B cell (primary cell): ENCODE measurements at regions of chr2 and their contacts with region 1.

Region 1: DNA sequence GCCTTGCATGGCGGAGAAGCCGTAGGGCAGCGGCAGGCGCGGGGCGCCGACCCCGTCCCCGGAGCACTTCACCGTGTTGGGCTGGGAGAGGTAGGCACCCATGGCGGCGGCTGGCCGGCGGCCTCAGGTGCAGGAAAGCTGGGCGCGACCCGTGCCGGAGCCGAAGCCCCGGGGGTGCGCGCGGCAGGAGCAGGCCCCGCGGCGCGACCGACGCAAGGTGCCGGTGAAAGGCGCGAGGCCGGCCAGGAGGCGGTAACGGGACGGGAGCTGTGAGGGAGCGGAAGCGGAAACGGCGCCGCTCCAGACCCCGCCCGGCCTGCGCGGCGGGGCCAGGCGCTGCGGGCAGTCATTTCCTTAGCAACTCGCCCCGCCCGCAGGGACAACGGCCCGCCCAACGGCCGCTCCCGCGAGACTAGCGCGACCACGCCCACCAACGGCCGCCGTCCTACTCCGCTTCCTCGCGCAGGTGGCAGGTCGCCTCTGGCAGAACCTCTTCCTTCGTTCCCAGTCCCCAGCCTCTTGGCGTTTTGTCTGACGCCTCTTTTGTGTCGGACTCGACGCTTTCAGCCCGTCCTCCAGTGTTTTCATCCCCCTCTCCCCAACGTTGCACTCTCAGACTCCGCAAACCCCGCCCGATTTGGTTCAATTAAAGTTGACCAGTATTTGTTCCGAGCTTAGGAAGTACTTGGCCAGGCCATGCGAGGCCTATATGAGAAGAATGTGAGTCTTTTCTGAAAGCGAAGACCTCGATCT is at the start of gene PPM1G:
- DNase-seq: peak; percentile 96
- ATAC-seq: peak; percentile 97
- H3K4me3 ChIP-seq: peak within 1 kb of the TSS; percentile 28 to 96 (median 95)
- H3K4me3 Mint-ChIP-seq: peak within 1 kb of the TSS; percentile 87
- H3K27ac ChIP-seq: peak within 1 kb of the TSS; percentile 76 to 77
- H3K27ac Mint-ChIP-seq: peak within 1 kb of the TSS; percentile 90
- H3K4me1 ChIP-seq: peaks cover 15 to 20% of the 10 kb centered on the region in 2 donors
- H3K4me1 Mint-ChIP-seq: peaks cover 26% of the 10 kb centered on the region
- H3K27me3 ChIP-seq: no peaks in the 10 kb centered on the region
- H3K27me3 Mint-ChIP-seq: peaks cover 13% of the 10 kb centered on the region
- CTCF ChIP-seq: no peak
- total RNA-seq, gene PPM1G: 45.5 and 48.9 TPM in 2 replicates

Region 2: DNA sequence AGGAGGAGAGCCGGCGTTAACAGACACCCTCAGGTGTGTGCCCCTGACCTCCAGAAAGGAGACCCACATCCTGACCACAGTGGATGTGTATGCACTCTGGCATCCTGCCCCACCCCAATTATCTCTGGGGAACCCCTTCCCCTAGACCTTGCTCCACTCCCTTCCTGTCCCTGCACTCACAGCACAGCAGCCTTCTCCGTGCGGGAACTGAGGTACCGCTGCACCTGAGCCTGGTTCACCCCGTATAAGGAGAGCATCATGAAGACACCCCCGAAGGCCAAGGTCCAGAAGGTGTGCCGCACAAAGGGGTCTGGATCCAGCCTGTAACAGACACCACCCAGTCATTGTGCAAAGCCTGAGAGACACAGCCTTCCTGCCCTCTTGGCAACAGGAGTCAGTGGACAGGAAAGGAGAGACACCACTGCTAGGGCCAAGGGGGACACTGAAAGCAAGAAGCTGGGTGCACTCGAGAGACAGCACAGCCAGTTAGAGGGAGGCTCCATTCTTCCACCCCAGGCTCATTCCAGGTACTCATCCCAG is 204.8 kb before region 1 on chr2:
- CTCF ChIA-PET with region 1: no interaction called
- POLR2A ChIA-PET with region 1: no interaction called
- intact Hi-C with region 1: no loop called
- DNase-seq: peak; percentile 11
- ATAC-seq: no peak
- H3K4me3 ChIP-seq: no peak overlapping the region
- H3K4me3 Mint-ChIP-seq: no peak overlapping the region
- H3K27ac ChIP-seq: no peak overlapping the region
- H3K27ac Mint-ChIP-seq: no peak overlapping the region
- H3K4me1 ChIP-seq: no peaks in the 10 kb centered on the region
- H3K4me1 Mint-ChIP-seq: no peaks in the 10 kb centered on the region
- H3K27me3 ChIP-seq: no peaks in the 10 kb centered on the region
- H3K27me3 Mint-ChIP-seq: no peaks in the 10 kb centered on the region
- CTCF ChIP-seq: no peak

Region 3: DNA sequence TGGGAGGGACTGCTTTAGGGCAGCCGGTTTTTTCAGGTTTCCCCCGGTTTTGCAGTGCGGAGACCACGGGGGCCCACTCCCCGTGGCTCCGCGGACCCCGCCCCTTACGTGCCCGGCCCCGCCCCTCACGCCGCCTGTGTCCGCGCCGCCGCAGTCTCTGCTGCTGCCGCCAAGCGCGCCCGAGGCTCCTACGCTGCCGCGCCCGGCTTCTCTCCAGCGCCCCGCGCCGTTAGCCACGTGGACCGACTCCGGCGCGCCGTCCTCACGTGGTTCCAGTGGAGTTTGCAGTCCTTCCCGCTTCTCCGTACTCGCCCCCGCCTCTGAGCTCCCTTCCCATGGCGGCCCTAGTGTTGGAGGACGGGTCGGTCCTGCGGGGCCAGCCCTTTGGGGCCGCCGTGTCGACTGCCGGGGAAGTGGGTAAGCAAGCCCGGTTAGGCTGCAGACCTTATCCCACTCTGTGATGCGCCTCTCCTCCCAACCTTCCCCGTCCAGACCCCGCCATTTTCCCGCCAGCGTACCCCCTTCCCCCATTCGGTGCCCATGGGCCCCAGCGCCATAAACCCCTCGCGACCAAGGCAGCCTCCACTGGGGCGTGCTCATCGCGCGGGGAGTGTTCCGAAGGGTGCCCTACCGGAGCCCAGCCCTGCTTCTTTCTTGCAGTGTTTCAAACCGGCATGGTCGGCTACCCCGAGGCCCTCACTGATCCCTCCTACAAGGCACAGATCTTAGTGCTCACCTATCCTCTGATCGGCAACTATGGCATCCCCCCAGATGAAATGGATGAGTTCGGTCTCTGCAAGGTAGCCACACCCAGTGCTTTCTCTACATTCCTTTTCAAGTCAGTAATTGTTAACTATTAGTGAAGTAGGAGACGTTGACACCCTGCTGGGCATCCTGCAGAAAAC is 192.0 kb before region 1 on chr2 and contains the start of gene CAD:
- CTCF ChIA-PET with region 1: no interaction called
- POLR2A ChIA-PET with region 1: no interaction called
- intact Hi-C with region 1: loop called (anchors 10 kb)
- DNase-seq: peak; percentile 89
- ATAC-seq: peak; percentile 86
- H3K4me3 ChIP-seq: peak within 1 kb of the TSS; percentile 11 to 85 (median 79)
- H3K4me3 Mint-ChIP-seq: peak within 1 kb of the TSS; percentile 98
- H3K27ac ChIP-seq: peak within 1 kb of the TSS; percentile 70 to 74
- H3K27ac Mint-ChIP-seq: peak within 1 kb of the TSS; percentile 87
- H3K4me1 ChIP-seq: peaks cover 28 to 33% of the 10 kb centered on the region in 2 donors
- H3K4me1 Mint-ChIP-seq: peaks cover 44% of the 10 kb centered on the region
- H3K27me3 ChIP-seq: no peaks in the 10 kb centered on the region
- H3K27me3 Mint-ChIP-seq: no peaks in the 10 kb centered on the region
- CTCF ChIP-seq: no peak
- total RNA-seq, gene CAD: 35.6 and 36.0 TPM in 2 replicates

Region 4: GRCh38 chr2:27380626-27381545 is 28.6 kb before region 1 on chr2 and contains the start of gene ZNF513:
- CTCF ChIA-PET with region 1: interaction called, 9 read pairs
- POLR2A ChIA-PET with region 1: interaction called, 5 read pairs
- intact Hi-C with region 1: loop called (anchors 1 kb)
- DNase-seq: peak; percentile 92
- ATAC-seq: peak; percentile 94
- H3K4me3 ChIP-seq: peak within 1 kb of the TSS; percentile 40 to 66 (median 63)
- H3K4me3 Mint-ChIP-seq: peak within 1 kb of the TSS; percentile 94
- H3K27ac ChIP-seq: peak within 1 kb of the TSS; percentile 56 to 94
- H3K27ac Mint-ChIP-seq: peak within 1 kb of the TSS; percentile 96
- H3K4me1 ChIP-seq: peaks cover 16 to 20% of the 10 kb centered on the region in 2 donors
- H3K4me1 Mint-ChIP-seq: peaks cover 30% of the 10 kb centered on the region
- H3K27me3 ChIP-seq: no peaks in the 10 kb centered on the region
- H3K27me3 Mint-ChIP-seq: no peaks in the 10 kb centered on the region
- CTCF ChIP-seq: no peak
- total RNA-seq, gene ZNF513: 29.0 and 31.7 TPM in 2 replicates

Region 5: GRCh38 chr2:27441958-27442919 is 32.7 kb after region 1 on chr2 and contains the start of gene KRTCAP3:
- CTCF ChIA-PET with region 1: no interaction called
- POLR2A ChIA-PET with region 1: no interaction called
- intact Hi-C with region 1: loop called (anchors 1 kb)
- DNase-seq: peak; percentile 70
- ATAC-seq: peak; percentile 98
- H3K4me3 ChIP-seq: peak within 1 kb of the TSS in 3 of 5 experiments; percentile 19 to 37 (median 27)
- H3K4me3 Mint-ChIP-seq: peak within 1 kb of the TSS; percentile 72
- H3K27ac ChIP-seq: no peak within 1 kb of the TSS
- H3K27ac Mint-ChIP-seq: peak within 1 kb of the TSS; percentile 72
- H3K4me1 ChIP-seq: peaks cover 3 to 6% of the 10 kb centered on the region in 2 donors
- H3K4me1 Mint-ChIP-seq: peaks cover 12% of the 10 kb centered on the region
- H3K27me3 ChIP-seq: no peaks in the 10 kb centered on the region
- H3K27me3 Mint-ChIP-seq: no peaks in the 10 kb centered on the region
- CTCF ChIP-seq: peak; percentile 58
- total RNA-seq, gene KRTCAP3: 15.0 and 16.5 TPM in 2 replicates

Region 6: GRCh38 chr2:27663463-27664249 is 254.2 kb after region 1 on chr2 and contains the starts of genes SLC4A1AP and SUPT7L:
- CTCF ChIA-PET with region 1: no interaction called
- POLR2A ChIA-PET with region 1: no interaction called
- intact Hi-C with region 1: loop called (anchors 1 kb)
- DNase-seq: peak; percentile 94
- ATAC-seq: peak; percentile 80
- H3K4me3 ChIP-seq: peak within 1 kb of the TSS; percentile 75 to 100 (median 97)
- H3K4me3 Mint-ChIP-seq: peak within 1 kb of the TSS; percentile 99
- H3K27ac ChIP-seq: peak within 1 kb of the TSS; percentile 75 to 99
- H3K27ac Mint-ChIP-seq: peak within 1 kb of the TSS; percentile 99
- H3K4me1 ChIP-seq: peaks cover 19 to 23% of the 10 kb centered on the region in 2 donors
- H3K4me1 Mint-ChIP-seq: peaks cover 42% of the 10 kb centered on the region
- H3K27me3 ChIP-seq: no peaks in the 10 kb centered on the region
- H3K27me3 Mint-ChIP-seq: no peaks in the 10 kb centered on the region
- CTCF ChIP-seq: no peak
- total RNA-seq, gene SLC4A1AP: 23.1 and 25.6 TPM in 2 replicates
- total RNA-seq, gene SUPT7L: 40.2 and 40.7 TPM in 2 replicates